Endothelial cell of umbilical vein (primary cell): ENCODE measurements at regions of chr20 and their contacts with region 1.

Region 1: DNA sequence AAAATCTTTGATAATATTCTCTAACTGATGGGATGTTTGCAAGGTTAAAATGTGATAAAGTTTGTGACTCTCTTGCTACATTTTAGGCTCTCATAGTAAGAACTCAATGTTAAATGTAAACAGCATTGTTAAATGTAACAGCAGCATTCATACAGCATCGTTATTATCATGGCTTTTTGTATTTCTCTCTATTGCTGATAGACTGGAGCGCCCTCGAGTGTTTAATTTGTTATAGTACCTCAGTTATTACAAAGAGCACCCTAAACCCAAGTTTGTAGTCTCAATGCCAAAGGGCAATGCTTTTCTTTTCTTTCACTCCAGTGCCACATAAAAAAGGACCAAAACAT is 14.9 kb upstream of the TTPAL start:
- DNase-seq: peak; percentile 16
- H3K4me3 ChIP-seq: no peak overlapping the region
- H3K27ac ChIP-seq: no peak overlapping the region
- H3K4me1 ChIP-seq: no peaks in the 10 kb centered on the region
- H3K27me3 ChIP-seq: no peaks in the 10 kb centered on the region
- CTCF ChIP-seq: peak; percentile 5 to 19
- POLR2A ChIP-seq: no peak

Region 2: DNA sequence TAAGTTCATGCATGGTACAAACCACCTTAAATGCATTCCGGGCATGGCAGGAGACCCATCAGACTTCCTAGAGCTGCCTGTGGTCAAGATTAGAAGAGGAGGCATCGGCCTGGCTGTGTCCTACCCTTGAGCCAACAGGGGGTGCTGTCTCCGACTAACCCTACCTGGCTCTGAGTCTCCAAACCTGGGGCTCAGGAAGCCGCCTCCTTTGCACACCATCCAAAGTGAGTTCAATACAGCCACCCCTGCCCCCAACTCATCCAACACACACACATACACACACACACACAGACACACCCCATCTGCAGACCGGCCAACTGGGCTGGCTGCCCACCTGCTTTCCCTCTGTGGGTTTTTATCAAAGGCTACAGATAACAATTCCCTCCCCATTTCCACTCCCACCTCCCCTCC is 350.8 kb before region 1 on chr20:
- CTCF ChIA-PET with region 1: no interaction called
- POLR2A ChIA-PET with region 1: no interaction called
- dilution Hi-C with region 1: no loop called
- intact Hi-C with region 1: loop called (anchors 10 kb)
- DNase-seq: no peak
- H3K4me3 ChIP-seq: no peak overlapping the region
- H3K27ac ChIP-seq: no peak overlapping the region
- H3K4me1 ChIP-seq: no peaks in the 10 kb centered on the region
- H3K27me3 ChIP-seq: peaks cover 9% of the 10 kb centered on the region in 2 experiments
- CTCF ChIP-seq: peak; percentile 6 to 8
- POLR2A ChIP-seq: no peak

Region 3: DNA sequence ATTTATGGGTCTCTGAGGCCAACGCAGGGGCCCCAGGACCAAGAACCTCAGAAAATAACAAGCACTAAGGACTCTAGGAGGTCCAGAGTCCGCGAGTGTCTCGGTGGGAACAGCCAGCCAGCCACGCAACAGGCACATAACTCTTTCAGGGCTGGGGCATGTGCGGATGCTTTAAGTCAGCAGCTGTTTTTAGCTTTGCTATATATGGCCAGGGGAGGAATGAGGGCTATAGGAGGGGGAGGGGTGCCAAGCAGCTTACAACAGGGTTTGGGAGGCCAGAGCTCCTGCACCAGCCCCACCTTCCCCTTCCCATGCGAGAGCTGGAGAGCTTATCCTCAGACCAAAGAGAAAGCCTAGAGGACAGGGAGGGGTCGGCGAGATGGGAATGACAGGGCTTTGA is 280.0 kb before region 1 on chr20:
- CTCF ChIA-PET with region 1: no interaction called
- POLR2A ChIA-PET with region 1: no interaction called
- dilution Hi-C with region 1: no loop called
- intact Hi-C with region 1: no loop called
- DNase-seq: no peak
- H3K4me3 ChIP-seq: no peak overlapping the region
- H3K27ac ChIP-seq: no peak overlapping the region
- H3K4me1 ChIP-seq: no peaks in the 10 kb centered on the region
- H3K27me3 ChIP-seq: peaks cover 6 to 27% of the 10 kb centered on the region in 2 experiments
- CTCF ChIP-seq: no peak
- POLR2A ChIP-seq: no peak

Region 4: GRCh38 chr20:44496976-44497375 is 36.2 kb after region 1 on chr20:
- CTCF ChIA-PET with region 1: no interaction called
- POLR2A ChIA-PET with region 1: no interaction called
- dilution Hi-C with region 1: no loop called
- intact Hi-C with region 1: no loop called
- DNase-seq: no peak
- H3K4me3 ChIP-seq: no peak overlapping the region
- H3K27ac ChIP-seq: no peak overlapping the region
- H3K4me1 ChIP-seq: no peaks in the 10 kb centered on the region
- H3K27me3 ChIP-seq: no peaks in the 10 kb centered on the region
- CTCF ChIP-seq: no peak
- POLR2A ChIP-seq: no peak